Caco-2 (cell line): ENCODE measurements at regions of chr4 and their contacts with region 1.

Region 1: DNA sequence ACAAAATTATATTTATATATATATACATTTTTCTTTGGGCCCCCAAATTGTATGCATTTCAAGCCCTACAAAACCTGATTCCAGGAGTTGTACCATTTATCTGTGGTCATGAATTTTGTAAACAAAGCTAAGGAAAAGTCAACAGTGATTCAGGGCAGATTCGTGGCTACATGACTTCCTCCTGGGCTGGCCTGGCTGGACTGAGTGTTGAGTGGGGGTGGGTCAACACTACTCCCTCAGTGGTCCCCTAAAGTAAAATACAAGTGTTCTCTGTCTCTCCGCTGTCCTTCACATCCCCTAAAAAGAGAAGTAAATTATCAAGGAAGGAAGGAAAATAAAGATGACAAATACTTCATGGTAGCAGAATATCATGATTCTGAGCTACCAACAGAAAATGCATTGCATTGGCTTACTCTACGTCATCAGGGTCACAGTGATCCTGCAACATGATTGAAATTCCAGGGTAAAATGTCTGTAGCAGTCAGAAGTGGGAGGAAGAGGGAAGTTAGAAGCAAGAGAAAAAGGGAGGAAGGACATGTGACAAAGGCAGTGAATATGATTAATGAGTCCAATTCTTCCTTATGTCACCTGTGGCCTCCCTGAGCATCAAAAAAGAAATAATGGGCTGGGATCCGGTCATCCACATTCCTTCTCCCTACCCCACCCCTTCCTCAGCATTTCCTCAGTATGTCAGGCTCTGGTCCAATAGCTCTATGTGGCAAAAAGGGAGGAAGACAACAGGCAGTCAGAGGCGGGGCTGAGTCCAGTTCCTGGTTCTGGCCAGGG is 42.4 kb upstream of the MYOZ2 start:
- DNase-seq: peak; percentile 37 to 42
- H3K4me3 ChIP-seq: no peak overlapping the region
- H3K4me3 Mint-ChIP-seq: peak overlapping the region; percentile 28
- H3K27ac Mint-ChIP-seq: peak overlapping the region; percentile 86
- H3K4me1 ChIP-seq: peaks cover 34% of the 10 kb centered on the region
- H3K4me1 Mint-ChIP-seq: peaks cover 40% of the 10 kb centered on the region
- H3K27me3 ChIP-seq: no peaks in the 10 kb centered on the region
- H3K27me3 Mint-ChIP-seq: no peaks in the 10 kb centered on the region
- CTCF ChIP-seq: no peak

Region 2: DNA sequence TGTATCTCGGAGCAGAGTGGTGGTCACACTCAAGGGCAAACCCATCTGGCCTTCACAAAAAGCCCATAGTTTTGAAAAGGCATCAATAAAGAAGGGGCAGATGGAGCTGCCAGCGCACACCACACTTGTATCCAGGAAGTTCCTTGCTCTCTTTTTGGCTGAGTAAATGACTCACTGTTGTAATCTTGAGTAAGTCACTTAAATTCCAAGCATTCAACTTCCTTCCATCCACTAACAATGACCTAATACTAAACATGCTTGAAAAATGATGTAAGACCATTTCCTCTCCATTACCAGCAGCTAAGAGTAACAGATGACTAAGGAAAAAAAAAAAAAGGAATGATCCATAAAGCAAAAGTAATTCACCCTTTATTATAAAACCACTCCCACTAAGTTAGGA is 10.0 kb after region 1 on chr4:
- CTCF ChIA-PET with region 1: no interaction called
- POLR2A ChIA-PET with region 1: no interaction called
- intact Hi-C with region 1: loop called (anchors 1 kb)
- DNase-seq: peak in 1 of 2 experiments; percentile 38
- H3K4me3 ChIP-seq: no peak overlapping the region
- H3K4me3 Mint-ChIP-seq: no peak overlapping the region
- H3K27ac Mint-ChIP-seq: peak overlapping the region; percentile 86
- H3K4me1 ChIP-seq: peaks cover 44% of the 10 kb centered on the region
- H3K4me1 Mint-ChIP-seq: peaks cover 18% of the 10 kb centered on the region
- H3K27me3 ChIP-seq: no peaks in the 10 kb centered on the region
- H3K27me3 Mint-ChIP-seq: no peaks in the 10 kb centered on the region
- CTCF ChIP-seq: no peak

Region 3: GRCh38 chr4:119151161-119151560 is 57.9 kb after region 1 on chr4:
- CTCF ChIA-PET with region 1: no interaction called
- POLR2A ChIA-PET with region 1: no interaction called
- intact Hi-C with region 1: no loop called
- DNase-seq: no peak
- H3K4me3 ChIP-seq: no peak overlapping the region
- H3K4me3 Mint-ChIP-seq: no peak overlapping the region
- H3K27ac Mint-ChIP-seq: no peak overlapping the region
- H3K4me1 ChIP-seq: no peaks in the 10 kb centered on the region
- H3K4me1 Mint-ChIP-seq: peaks cover 9% of the 10 kb centered on the region
- H3K27me3 ChIP-seq: no peaks in the 10 kb centered on the region
- H3K27me3 Mint-ChIP-seq: no peaks in the 10 kb centered on the region
- CTCF ChIP-seq: no peak

Region 4: DNA sequence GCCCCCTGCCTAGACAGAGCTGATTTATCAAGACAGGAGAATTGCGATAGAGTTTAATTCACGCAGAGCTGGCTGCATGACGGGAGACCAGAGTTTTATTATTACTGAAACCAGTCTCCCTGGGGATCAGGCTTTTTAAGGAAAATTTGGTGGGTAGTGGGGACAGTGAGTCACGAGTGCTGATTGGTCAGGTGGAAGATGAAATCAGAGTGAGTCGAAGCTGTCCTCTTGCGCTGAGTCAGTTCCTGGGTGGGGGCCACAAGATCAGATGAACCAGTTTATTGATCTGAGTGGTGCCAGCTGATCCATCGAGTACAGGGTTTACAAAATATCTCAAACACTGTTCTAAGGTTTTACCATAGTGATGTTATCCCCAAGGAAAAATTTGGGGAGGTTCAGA is 79.0 kb after region 1 on chr4:
- CTCF ChIA-PET with region 1: no interaction called
- POLR2A ChIA-PET with region 1: no interaction called
- intact Hi-C with region 1: no loop called
- DNase-seq: no peak
- H3K4me3 ChIP-seq: no peak overlapping the region
- H3K4me3 Mint-ChIP-seq: no peak overlapping the region
- H3K27ac Mint-ChIP-seq: no peak overlapping the region
- H3K4me1 ChIP-seq: no peaks in the 10 kb centered on the region
- H3K4me1 Mint-ChIP-seq: no peaks in the 10 kb centered on the region
- H3K27me3 ChIP-seq: no peaks in the 10 kb centered on the region
- H3K27me3 Mint-ChIP-seq: no peaks in the 10 kb centered on the region
- CTCF ChIP-seq: no peak